ENCODE measurements at regions of chr1 and their contacts with region 1.

Region 1: DNA sequence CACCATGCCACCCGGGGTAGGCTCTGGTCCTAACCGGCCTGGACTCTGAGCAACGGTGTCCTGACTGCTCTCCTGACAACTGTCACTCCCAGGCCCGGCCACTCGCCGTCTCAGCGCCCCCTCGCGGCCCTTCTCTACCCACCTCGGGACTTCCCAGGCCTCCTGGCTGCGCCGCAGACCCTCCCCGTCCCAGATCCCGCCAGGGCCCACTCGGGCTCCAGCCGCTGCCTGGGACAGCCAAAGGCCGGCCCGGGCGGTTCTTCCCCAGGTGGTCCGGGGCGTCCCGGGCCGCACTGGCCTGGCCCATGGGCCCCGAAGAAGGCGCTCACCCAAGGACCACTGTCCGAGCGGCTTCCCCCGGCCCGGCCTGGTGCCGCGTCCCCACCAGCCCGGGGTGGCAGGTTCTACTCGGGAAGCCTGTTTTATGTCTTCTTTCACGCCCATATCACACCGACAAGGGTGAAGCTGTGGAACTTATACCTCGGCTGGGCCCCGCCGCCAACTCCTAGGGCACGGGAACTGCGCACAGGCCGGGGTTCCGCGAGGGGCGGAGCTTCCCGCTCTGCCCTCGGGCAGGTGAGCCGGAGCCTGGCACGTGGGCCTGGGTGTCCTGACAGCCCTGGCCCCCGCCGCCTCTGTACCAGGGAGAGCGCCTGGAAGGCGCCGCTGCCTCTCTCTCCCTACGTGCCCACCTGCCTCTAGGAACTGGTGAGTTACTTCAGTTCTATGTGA is 138.3 kb downstream of the TTLL7 start:
- DNase-seq: peak in 1 of 2 experiments; percentile 78
- H3K4me3 ChIP-seq: peak overlapping the region; percentile 82
- H3K27ac ChIP-seq: no peak overlapping the region
- H3K4me1 ChIP-seq: no peaks in the 10 kb centered on the region; the same call in 1 of the 2 replicates
- H3K27me3 ChIP-seq: no peaks in the 10 kb centered on the region
- CTCF ChIP-seq: peak; percentile 91

Region 2: DNA sequence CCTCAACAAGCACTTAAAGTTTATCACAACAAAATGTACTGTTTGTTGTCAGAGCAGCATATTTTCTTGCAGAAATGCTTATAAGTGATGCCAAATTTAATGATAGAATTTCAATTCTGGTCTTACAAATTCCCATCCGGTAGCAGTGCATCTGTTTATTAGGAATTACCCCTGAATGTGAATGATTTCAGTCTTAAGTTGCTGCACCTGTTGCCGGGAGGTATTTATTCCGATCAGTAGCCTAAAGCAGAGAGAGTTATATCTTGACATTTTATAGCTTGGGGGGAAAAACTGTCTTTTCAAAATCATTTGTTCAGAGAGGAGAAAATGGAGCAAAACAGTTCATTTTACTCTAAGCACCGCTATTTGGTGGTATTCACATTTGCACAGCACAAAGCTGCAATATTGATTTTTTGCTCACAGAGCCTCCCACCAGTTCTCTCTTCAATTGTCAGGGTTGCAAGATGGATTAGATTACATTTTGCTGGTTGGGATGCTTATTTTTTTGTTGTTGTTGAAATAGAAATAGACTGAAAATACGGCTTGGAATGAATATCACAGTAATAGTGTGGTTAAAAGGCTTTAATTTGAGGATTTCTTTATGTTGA is 1961.3 kb before region 1 on chr1:
- CTCF ChIA-PET with region 1: interaction called, 10 read pairs
- POLR2A ChIA-PET with region 1: no interaction called
- intact Hi-C with region 1: no loop called
- DNase-seq: no peak
- H3K4me3 ChIP-seq: no peak overlapping the region
- H3K27ac ChIP-seq: no peak overlapping the region
- H3K4me1 ChIP-seq: no peaks in the 10 kb centered on the region
- H3K27me3 ChIP-seq: no peaks in the 10 kb centered on the region
- CTCF ChIP-seq: no peak

Region 3: GRCh38 chr1:82013702-82014101 is 1847.0 kb before region 1 on chr1:
- CTCF ChIA-PET with region 1: no interaction called
- POLR2A ChIA-PET with region 1: no interaction called
- intact Hi-C with region 1: loop called (anchors 10 kb)
- DNase-seq: no peak
- H3K4me3 ChIP-seq: no peak overlapping the region
- H3K27ac ChIP-seq: no peak overlapping the region
- H3K4me1 ChIP-seq: no peaks in the 10 kb centered on the region
- H3K27me3 ChIP-seq: no peaks in the 10 kb centered on the region
- CTCF ChIP-seq: no peak

Region 4: GRCh38 chr1:83508485-83509151 is 352.0 kb before region 1 on chr1:
- CTCF ChIA-PET with region 1: no interaction called
- POLR2A ChIA-PET with region 1: no interaction called
- intact Hi-C with region 1: no loop called
- DNase-seq: no peak
- H3K4me3 ChIP-seq: no peak overlapping the region
- H3K27ac ChIP-seq: no peak overlapping the region
- H3K4me1 ChIP-seq: no peaks in the 10 kb centered on the region
- H3K27me3 ChIP-seq: no peaks in the 10 kb centered on the region
- CTCF ChIP-seq: no peak